ENCODE measurements at regions of chr3 and their contacts with region 1.

Region 1: DNA sequence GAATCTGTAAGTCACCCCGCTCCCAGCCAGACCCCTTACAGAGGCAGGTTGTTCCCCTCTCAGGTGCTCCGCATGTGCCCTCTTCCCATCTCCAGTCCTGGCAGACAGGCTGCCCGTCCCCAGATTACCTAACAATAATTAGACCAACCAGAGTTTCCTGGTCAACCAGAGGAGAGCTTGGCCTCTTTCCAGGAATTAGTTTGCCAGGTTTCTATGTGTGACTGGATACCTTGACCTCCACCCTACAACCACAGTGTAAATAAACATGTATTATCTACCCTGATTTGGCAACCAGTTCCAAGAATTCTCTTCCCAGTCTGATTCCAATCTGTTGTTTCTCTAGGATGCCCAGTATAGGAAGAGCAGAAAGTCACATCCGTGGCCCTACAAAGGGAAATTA is 178.0 kb upstream of the UMPS start:
- DNase-seq: no peak
- ATAC-seq: no peak
- H3K4me3 ChIP-seq: no peak overlapping the region
- H3K27ac ChIP-seq: no peak overlapping the region
- H3K4me1 ChIP-seq: no peaks in the 10 kb centered on the region
- H3K27me3 ChIP-seq: no peaks in the 10 kb centered on the region
- CTCF ChIP-seq: no peak
- EP300 ChIP-seq: no peak
- POLR2A ChIP-seq: no peak
- RAD21 ChIP-seq: no peak

Region 2: DNA sequence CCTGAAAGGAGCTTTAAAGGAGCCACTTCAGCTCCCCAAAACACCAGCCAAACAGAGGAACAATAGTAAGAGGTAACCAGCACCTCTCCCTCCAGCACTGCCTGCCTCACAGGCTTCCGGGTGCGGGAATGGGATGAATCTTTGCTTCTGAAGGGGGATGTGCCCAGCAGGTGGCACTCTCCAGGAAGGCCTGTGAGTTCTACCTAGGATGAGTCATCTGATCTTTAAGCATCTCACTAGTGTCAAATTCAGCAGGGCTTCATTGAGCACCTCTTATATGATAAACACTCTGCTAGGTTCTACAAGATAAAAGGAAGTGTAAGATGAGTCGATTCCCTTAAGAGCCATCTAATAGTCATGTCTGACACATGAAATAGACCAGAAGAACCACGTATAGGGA is 59.4 kb before region 1 on chr3:
- CTCF ChIA-PET with region 1: interaction called, 8 read pairs
- POLR2A ChIA-PET with region 1: no interaction called
- RAD21 ChIA-PET with region 1: no interaction called
- SMC1A ChIA-PET with region 1: no interaction called
- in situ Hi-C with region 1: no loop called
- intact Hi-C with region 1: loop called (anchors 2 kb)
- DNase-seq: no peak
- ATAC-seq: peak; percentile 71
- H3K4me3 ChIP-seq: no peak overlapping the region
- H3K27ac ChIP-seq: no peak overlapping the region
- H3K4me1 ChIP-seq: no peaks in the 10 kb centered on the region
- H3K27me3 ChIP-seq: 0 out of 4 replicates have a peak, but pooled peaks cover 0 to 2% of the 10 kb centered on the region in 2 experiments
- CTCF ChIP-seq: peak; percentile 28 to 37 (median 34); a peak in 4 of 6 replicates
- EP300 ChIP-seq: no peak
- POLR2A ChIP-seq: no peak
- RAD21 ChIP-seq: no peak

Region 3: GRCh38 chr3:124599779-124600609 is 47.8 kb after region 1 on chr3:
- CTCF ChIA-PET with region 1: no interaction called
- POLR2A ChIA-PET with region 1: no interaction called
- RAD21 ChIA-PET with region 1: no interaction called
- SMC1A ChIA-PET with region 1: no interaction called
- in situ Hi-C with region 1: no loop called
- intact Hi-C with region 1: no loop called
- DNase-seq: no peak
- ATAC-seq: peak; percentile 32; the same call in 1 of the 3 replicates
- H3K4me3 ChIP-seq: no peak overlapping the region
- H3K27ac ChIP-seq: no peak overlapping the region
- H3K4me1 ChIP-seq: no peaks in the 10 kb centered on the region
- H3K27me3 ChIP-seq: no peaks in the 10 kb centered on the region
- CTCF ChIP-seq: no peak
- EP300 ChIP-seq: no peak
- POLR2A ChIP-seq: no peak
- RAD21 ChIP-seq: no peak

Measured in GM12878 (cell line).